ENCODE measurements at regions of chr11 and their contacts with region 1.

Region 1: GRCh38 chr11:62591448-62592145 is at the start of gene TUT1:
- DNase-seq: peak; percentile 98
- ATAC-seq: peak; percentile 93
- H3K4me3 ChIP-seq: peak within 1 kb of the TSS; percentile 99
- H3K27ac ChIP-seq: peak within 1 kb of the TSS; percentile 76
- H3K4me1 ChIP-seq: peaks cover 8% of the 10 kb centered on the region
- H3K27me3 ChIP-seq: no peaks in the 10 kb centered on the region
- CTCF ChIP-seq: no peak
- EP300 ChIP-seq: peak in 1 of 2 experiments; percentile 36; a peak in 1 of 4 replicates
- POLR2A ChIP-seq: peak; percentile 97
- RAD21 ChIP-seq: no peak
- polyA plus RNA-seq, gene TUT1: 1.1 to 1.4 TPM

Region 2: GRCh38 chr11:62542750-62543567 is 48.6 kb before region 1 on chr11:
- CTCF ChIA-PET with region 1: interaction called, 28 read pairs
- POLR2A ChIA-PET with region 1: interaction called, 12 read pairs
- RAD21 ChIA-PET with region 1: interaction called, 33 read pairs
- SMC1A ChIA-PET with region 1: interaction called, 4 read pairs
- in situ Hi-C with region 1: no loop called
- intact Hi-C with region 1: loop called (anchors 1 kb)
- DNase-seq: peak; percentile 51
- ATAC-seq: peak; percentile 48
- H3K4me3 ChIP-seq: peak overlapping the region; percentile 84
- H3K27ac ChIP-seq: peak overlapping the region; percentile 95
- H3K4me1 ChIP-seq: peaks cover 77% of the 10 kb centered on the region
- H3K27me3 ChIP-seq: no peaks in the 10 kb centered on the region; a peak in 2 of 4 replicates
- CTCF ChIP-seq: peak; percentile 97 to 99 (median 97)
- EP300 ChIP-seq: no peak
- POLR2A ChIP-seq: no peak
- RAD21 ChIP-seq: peak; percentile 81

Region 3: DNA sequence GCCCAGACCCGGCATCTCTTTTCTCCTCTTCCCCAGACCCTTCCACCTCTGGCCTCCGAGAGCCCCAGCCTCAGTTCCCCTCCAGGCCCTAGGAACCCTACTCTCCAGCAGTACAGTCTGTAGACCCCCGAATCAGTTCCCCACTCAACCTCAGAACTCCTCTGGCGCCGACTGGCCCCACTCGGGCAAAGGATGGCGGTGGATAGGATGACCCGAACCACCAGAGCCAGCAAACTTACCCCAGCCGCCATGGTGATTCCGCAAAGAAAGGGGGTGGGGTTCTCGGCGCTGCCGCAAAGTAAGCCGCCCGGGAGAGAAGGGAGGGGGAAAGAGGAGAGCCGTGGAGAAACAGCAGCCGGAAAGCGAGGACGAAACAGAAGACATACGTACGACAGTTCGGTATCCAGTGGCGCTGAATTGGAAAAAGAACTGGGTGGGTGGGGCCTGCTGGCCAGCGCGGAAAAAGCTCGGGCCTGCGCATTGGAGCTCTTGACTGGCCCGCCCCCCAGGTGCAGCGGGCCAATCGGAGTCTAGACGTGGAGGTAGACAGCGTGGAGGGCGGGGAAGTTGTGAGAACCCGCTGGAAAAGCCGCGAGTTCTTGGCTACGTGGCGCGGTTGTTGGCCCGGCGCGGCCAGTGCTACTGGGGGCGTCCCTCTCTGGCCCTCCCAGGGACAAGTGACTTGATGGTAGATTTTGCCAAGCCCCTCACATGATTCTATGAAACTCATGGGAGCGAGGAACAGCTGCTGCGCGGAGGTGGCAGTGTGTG is 17.8 kb before region 1 on chr11 and contains the start of gene EEF1G:
- CTCF ChIA-PET with region 1: interaction called, 27 read pairs
- POLR2A ChIA-PET with region 1: interaction called, 37 read pairs
- RAD21 ChIA-PET with region 1: interaction called, 27 read pairs
- SMC1A ChIA-PET with region 1: interaction called, 14 read pairs
- in situ Hi-C with region 1: no loop called
- intact Hi-C with region 1: no loop called
- DNase-seq: peak; percentile 99
- ATAC-seq: peak; percentile 96
- H3K4me3 ChIP-seq: peak within 1 kb of the TSS; percentile 99
- H3K27ac ChIP-seq: peak within 1 kb of the TSS; percentile 93
- H3K4me1 ChIP-seq: peaks cover 24% of the 10 kb centered on the region
- H3K27me3 ChIP-seq: no peaks in the 10 kb centered on the region
- CTCF ChIP-seq: no peak
- EP300 ChIP-seq: peak in 1 of 2 experiments; percentile 51; a peak in 1 of 4 replicates
- POLR2A ChIP-seq: peak; percentile 93
- RAD21 ChIP-seq: no peak
- polyA plus RNA-seq, gene EEF1G: 1,227 to 1,233 TPM

Region 4: DNA sequence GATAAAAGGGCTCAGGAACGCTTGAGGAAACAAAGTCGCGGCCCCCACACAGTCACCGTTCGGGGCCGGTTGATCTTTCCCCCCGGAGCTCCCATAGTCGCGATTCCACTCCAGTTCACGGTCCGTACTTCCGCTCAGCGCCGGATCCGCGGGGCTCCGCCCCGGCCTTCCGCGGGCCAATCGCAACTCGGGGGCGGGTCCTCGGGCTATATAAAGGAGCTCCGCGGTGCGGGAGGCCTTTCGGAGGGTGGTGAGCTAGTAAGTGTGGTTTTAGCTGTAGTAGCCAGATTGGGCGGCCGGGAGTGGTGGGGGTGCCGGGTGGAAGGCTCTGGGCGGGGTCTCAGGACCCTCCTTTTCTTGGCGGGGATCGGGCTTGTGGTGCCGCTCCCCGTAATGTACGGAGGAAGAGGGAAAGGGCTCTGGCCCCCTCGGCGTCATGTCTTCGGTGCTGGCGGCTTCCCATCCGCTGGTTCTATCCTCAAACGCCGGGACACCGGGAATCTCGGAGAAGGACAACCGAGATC is 73.5 kb after region 1 on chr11 and contains the starts of genes C11orf98 and CSKMT:
- CTCF ChIA-PET with region 1: interaction called, 11 read pairs
- POLR2A ChIA-PET with region 1: interaction called, 22 read pairs
- RAD21 ChIA-PET with region 1: interaction called, 10 read pairs
- SMC1A ChIA-PET with region 1: interaction called, 14 read pairs
- in situ Hi-C with region 1: no loop called
- intact Hi-C with region 1: loop called (anchors 2 kb)
- DNase-seq: no peak
- ATAC-seq: peak; percentile 91
- H3K4me3 ChIP-seq: peak within 1 kb of the TSS; percentile 95
- H3K27ac ChIP-seq: peak within 1 kb of the TSS; percentile 95
- H3K4me1 ChIP-seq: peaks cover 13% of the 10 kb centered on the region
- H3K27me3 ChIP-seq: no peaks in the 10 kb centered on the region
- CTCF ChIP-seq: no peak
- EP300 ChIP-seq: no peak
- POLR2A ChIP-seq: peak; percentile 96
- RAD21 ChIP-seq: no peak
- polyA plus RNA-seq, gene C11orf98: 134 to 199 TPM
- polyA plus RNA-seq, gene CSKMT: 17.0 to 20.4 TPM

Region 5: GRCh38 chr11:62705880-62706849 is 114.6 kb after region 1 on chr11:
- CTCF ChIA-PET with region 1: interaction called, 4 read pairs
- POLR2A ChIA-PET with region 1: interaction called, 10 read pairs
- RAD21 ChIA-PET with region 1: interaction called, 8 read pairs
- SMC1A ChIA-PET with region 1: interaction called, 7 read pairs
- in situ Hi-C with region 1: no loop called
- intact Hi-C with region 1: no loop called
- DNase-seq: peak; percentile 50
- ATAC-seq: peak; percentile 81
- H3K4me3 ChIP-seq: peak overlapping the region; percentile 79
- H3K27ac ChIP-seq: peak overlapping the region; percentile 51
- H3K4me1 ChIP-seq: peaks cover 29% of the 10 kb centered on the region
- H3K27me3 ChIP-seq: no peaks in the 10 kb centered on the region
- CTCF ChIP-seq: no peak
- EP300 ChIP-seq: no peak
- POLR2A ChIP-seq: peak; percentile 78
- RAD21 ChIP-seq: no peak

Region 6: DNA sequence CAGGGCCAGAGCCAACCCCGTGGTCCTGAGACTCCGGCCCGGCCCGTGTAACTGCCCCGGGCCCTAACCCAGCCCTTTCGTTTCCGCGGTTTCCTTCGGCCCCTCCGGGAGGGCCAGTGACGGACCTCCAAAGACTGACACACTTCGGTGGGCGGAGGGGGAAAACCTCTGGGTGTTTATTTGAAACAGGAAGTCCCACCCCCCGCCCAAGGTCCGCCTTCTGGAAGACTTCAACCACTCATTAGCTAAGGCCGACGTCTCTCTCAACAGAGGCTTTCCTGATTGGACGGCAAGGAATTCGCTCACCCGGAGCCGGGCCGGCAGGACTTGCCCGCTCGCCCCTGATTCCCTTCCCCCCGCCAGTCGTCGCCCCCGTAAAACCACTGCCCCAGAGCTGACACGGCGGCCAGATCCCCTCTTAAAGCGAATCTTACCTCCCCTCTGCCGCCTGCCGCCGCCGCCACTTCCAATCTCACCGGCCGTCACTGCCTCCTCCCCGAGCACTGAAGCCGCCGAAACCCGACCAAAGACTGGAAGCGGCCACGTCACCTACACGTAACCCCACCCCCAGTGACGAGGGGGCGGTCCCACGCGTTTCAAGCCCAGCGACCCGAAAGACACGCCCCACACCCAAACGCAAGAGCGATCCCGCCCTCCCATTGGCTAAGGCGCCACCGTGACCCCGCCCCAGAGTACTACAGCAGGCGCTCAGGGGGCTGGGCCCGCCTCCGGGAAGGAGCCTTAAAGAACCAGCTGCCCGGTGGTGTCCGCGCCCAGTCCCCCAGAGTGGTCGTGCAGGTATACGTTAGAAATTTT is 240.1 kb after region 1 on chr11 and contains the start of gene STX5:
- CTCF ChIA-PET with region 1: interaction called, 4 read pairs
- POLR2A ChIA-PET with region 1: no interaction called
- RAD21 ChIA-PET with region 1: no interaction called
- SMC1A ChIA-PET with region 1: interaction called, 3 read pairs
- in situ Hi-C with region 1: no loop called
- intact Hi-C with region 1: loop called (anchors 10 kb)
- DNase-seq: peak; percentile 93
- ATAC-seq: peak; percentile 93
- H3K4me3 ChIP-seq: peak within 1 kb of the TSS; percentile 99
- H3K27ac ChIP-seq: peak within 1 kb of the TSS; percentile 84
- H3K4me1 ChIP-seq: peaks cover 8% of the 10 kb centered on the region
- H3K27me3 ChIP-seq: no peaks in the 10 kb centered on the region
- CTCF ChIP-seq: no peak
- EP300 ChIP-seq: 0 out of 4 replicates have a peak, but pooled peaks of 1 of the 2 experiments have one; percentile 16
- POLR2A ChIP-seq: peak; percentile 88
- RAD21 ChIP-seq: no peak
- polyA plus RNA-seq, gene STX5: 3.8 to 4.5 TPM

Region 7: GRCh38 chr11:62918531-62918930 is 326.9 kb after region 1 on chr11:
- CTCF ChIA-PET with region 1: no interaction called
- POLR2A ChIA-PET with region 1: no interaction called
- RAD21 ChIA-PET with region 1: no interaction called
- SMC1A ChIA-PET with region 1: no interaction called
- in situ Hi-C with region 1: no loop called
- intact Hi-C with region 1: no loop called
- DNase-seq: no peak
- ATAC-seq: no peak
- H3K4me3 ChIP-seq: no peak overlapping the region
- H3K27ac ChIP-seq: no peak overlapping the region
- H3K4me1 ChIP-seq: peaks cover 9% of the 10 kb centered on the region
- H3K27me3 ChIP-seq: peaks cover 2 to 4% of the 10 kb centered on the region in 2 experiments; a peak in 2 of 4 replicates
- CTCF ChIP-seq: no peak
- EP300 ChIP-seq: no peak
- POLR2A ChIP-seq: no peak
- RAD21 ChIP-seq: no peak

Measured in GM12878 (cell line).